Sigmoid colon (tissue), 7 donors: ENCODE measurements at regions of chr1 and their contacts with region 1.

Region 1: DNA sequence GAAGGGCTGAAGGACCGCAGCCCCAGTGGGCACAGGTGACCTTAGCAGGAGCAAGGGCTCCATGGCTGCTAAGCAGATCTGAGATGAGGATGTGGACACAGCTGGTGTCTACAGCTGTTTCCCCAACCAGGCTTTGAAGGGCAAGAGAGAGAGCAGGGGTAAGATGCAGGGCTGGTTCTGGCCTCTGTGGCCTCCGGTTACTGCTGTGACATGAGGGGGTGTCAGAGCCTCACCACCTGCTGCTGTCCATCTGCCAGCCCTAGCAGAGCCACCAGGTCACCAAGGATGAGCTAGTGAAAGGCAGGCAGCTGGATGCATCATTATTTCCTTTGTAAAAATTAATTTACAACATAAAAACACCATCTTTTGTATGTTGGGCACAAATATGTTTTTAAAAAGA is 33.4 kb downstream of the OBSCN start:
- DNase-seq: no peak
- H3K4me3 ChIP-seq: no peak overlapping the region
- H3K27ac ChIP-seq: no peak overlapping the region
- H3K4me1 ChIP-seq: no peaks in the 10 kb centered on the region
- H3K27me3 ChIP-seq: no peaks in the 10 kb centered on the region
- CTCF ChIP-seq: no peak
- EP300 ChIP-seq: no peak
- POLR2A ChIP-seq: no peak

Region 2: GRCh38 chr1:228321435-228321834 is 80.2 kb after region 1 on chr1:
- intact Hi-C with region 1: loop called (anchors 10 kb)
- DNase-seq: no peak
- H3K4me3 ChIP-seq: no peak overlapping the region
- H3K27ac ChIP-seq: no peak overlapping the region
- H3K4me1 ChIP-seq: no peaks in the 10 kb centered on the region
- H3K27me3 ChIP-seq: no peaks in the 10 kb centered on the region
- CTCF ChIP-seq: no peak
- EP300 ChIP-seq: no peak
- POLR2A ChIP-seq: no peak